ENCODE measurements at regions of chr10 and their contacts with region 1.

Region 1: DNA sequence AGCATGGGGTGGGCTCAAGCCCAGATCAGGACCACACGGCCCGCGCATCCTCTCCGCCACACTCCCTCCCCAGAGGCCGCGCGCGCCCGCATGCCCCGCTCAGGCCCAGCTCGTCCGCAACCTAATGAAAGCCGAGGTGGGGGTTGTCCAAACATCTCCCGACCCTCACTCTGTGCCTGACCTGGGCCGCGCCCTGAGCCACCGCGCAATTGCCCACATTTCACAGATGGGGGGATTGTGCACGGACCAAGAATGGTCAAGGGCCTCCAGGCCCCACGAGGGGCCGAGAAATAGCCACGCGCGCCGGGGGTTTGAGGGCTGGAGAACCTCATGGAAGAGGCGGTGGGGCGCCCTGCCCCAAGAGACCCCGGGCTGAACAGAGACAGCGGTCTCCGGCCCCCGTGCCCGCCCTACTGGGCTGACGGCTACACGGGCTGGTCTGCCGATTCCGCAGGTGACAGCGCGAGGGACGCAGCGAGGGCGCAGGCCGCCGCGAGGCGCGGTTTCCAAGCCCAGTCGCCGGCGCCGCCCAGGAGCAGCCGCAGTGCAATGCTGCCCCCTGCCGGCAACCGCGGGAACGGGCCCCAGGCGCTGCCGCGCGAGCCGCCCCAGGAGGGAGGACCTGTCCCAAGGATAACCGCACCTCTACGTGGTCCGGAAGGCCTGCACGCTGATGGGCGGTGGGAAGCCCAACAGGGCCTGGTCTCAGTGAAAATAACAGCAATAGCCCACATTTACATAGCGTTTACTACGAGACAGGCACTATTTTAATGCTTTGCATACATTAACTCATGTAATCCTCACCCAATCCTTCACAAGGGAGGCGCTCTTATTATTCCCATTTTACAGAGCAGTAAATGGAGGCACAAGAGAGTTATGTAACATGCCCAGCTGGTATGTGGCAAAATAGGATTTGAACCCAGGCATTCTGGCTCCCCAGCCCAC is 10.5 kb upstream of the GRID1 start:
- DNase-seq: peak; percentile 82
- ATAC-seq: peak; percentile 93
- H3K4me3 ChIP-seq: peak overlapping the region in 2 of 5 experiments; percentile 20 to 24
- H3K4me3 Mint-ChIP-seq: no peak overlapping the region
- H3K27ac ChIP-seq: no peak overlapping the region
- H3K27ac Mint-ChIP-seq: no peak overlapping the region
- H3K4me1 ChIP-seq: peaks cover 5 to 8% of the 10 kb centered on the region in 2 donors
- H3K4me1 Mint-ChIP-seq: peaks cover 2% of the 10 kb centered on the region
- H3K27me3 ChIP-seq: peaks cover 0 to 54% (median 21%) of the 10 kb centered on the region in 4 experiments
- H3K27me3 Mint-ChIP-seq: peaks cover 55% of the 10 kb centered on the region
- CTCF ChIP-seq: peak; percentile 99

Region 2: DNA sequence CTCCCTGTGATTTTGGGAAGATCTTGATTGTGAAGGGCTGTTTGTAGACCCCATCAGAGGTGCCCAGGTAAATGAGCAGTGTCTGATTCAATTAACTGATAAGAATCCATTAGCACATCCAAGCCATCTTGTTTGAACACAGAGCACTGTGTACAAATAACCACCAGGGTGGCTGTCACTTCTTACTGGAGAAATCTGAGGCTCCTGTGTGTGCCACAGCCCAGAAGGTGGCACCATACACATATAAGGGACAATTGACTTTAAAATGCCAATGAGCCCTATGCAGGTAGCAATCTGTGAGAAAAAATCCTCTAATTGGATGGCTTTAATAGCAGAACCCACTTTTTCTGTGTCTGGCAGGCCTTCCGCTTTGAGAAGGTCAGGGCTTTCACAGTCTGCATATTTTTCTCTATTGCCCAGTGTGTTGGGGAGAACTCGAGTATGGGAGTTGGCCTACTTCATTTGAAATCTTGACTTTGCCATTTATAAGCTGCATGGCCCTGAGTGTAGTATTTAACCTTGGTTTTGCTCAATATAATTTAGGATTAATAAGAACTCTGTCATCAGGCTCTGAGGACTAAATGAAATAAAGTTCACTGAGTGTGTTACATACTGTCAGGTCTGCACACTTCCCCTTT is 1531.4 kb before region 1 on chr10:
- CTCF ChIA-PET with region 1: no interaction called
- POLR2A ChIA-PET with region 1: no interaction called
- intact Hi-C with region 1: loop called (anchors 10 kb)
- DNase-seq: no peak
- ATAC-seq: no peak
- H3K4me3 ChIP-seq: no peak overlapping the region
- H3K4me3 Mint-ChIP-seq: no peak overlapping the region
- H3K27ac ChIP-seq: no peak overlapping the region
- H3K27ac Mint-ChIP-seq: no peak overlapping the region
- H3K4me1 ChIP-seq: no peaks in the 10 kb centered on the region
- H3K4me1 Mint-ChIP-seq: no peaks in the 10 kb centered on the region
- H3K27me3 ChIP-seq: no peaks in the 10 kb centered on the region
- H3K27me3 Mint-ChIP-seq: no peaks in the 10 kb centered on the region
- CTCF ChIP-seq: no peak

Region 3: DNA sequence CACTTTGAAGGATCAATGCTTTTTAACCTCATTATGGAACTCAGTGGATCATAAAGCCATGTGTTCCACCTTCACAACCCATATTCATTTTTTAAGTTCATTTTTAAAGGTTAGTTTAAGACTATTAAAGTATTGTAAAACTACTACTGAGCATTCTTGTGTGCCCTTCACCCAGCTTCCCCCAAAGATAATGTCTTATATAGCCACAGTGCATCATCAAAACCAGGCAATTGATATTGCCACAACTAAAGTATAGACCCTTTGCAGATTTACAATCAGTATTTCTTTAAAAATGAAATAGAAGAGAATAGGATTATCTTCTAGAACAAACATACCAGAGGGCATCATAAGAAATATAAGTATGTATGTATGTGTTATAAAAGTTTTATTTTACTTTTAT is 1451.6 kb before region 1 on chr10:
- CTCF ChIA-PET with region 1: no interaction called
- POLR2A ChIA-PET with region 1: no interaction called
- intact Hi-C with region 1: loop called (anchors 5 kb)
- DNase-seq: no peak
- ATAC-seq: no peak
- H3K4me3 ChIP-seq: no peak overlapping the region
- H3K4me3 Mint-ChIP-seq: no peak overlapping the region
- H3K27ac ChIP-seq: no peak overlapping the region
- H3K27ac Mint-ChIP-seq: no peak overlapping the region
- H3K4me1 ChIP-seq: no peaks in the 10 kb centered on the region
- H3K4me1 Mint-ChIP-seq: no peaks in the 10 kb centered on the region
- H3K27me3 ChIP-seq: no peaks in the 10 kb centered on the region
- H3K27me3 Mint-ChIP-seq: no peaks in the 10 kb centered on the region
- CTCF ChIP-seq: no peak

Region 4: DNA sequence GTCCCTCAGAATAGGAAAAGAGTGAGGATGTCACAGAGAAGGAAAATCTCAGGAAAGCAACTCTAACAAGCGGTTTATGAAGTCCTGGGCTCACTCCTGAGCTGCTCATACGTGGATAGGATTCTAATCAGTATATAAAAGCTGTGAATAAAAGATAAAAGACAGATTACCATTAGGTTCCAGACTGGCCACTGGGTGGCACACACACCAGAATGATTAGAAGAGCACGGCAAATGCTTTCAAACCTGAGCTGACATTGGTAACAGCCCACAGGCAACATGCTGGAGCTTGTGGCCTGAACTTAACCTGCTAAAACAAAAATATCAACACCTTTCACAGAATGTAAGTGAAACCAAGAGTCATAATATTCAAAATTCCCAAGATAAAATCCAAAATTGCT is 381.3 kb before region 1 on chr10:
- CTCF ChIA-PET with region 1: interaction called, 8 read pairs
- POLR2A ChIA-PET with region 1: no interaction called
- intact Hi-C with region 1: loop called (anchors 5 kb)
- DNase-seq: no peak
- ATAC-seq: no peak
- H3K4me3 ChIP-seq: no peak overlapping the region
- H3K4me3 Mint-ChIP-seq: no peak overlapping the region
- H3K27ac ChIP-seq: no peak overlapping the region
- H3K27ac Mint-ChIP-seq: no peak overlapping the region
- H3K4me1 ChIP-seq: no peaks in the 10 kb centered on the region
- H3K4me1 Mint-ChIP-seq: no peaks in the 10 kb centered on the region
- H3K27me3 ChIP-seq: peaks cover 0 to 17% (median 8%) of the 10 kb centered on the region in 4 experiments
- H3K27me3 Mint-ChIP-seq: peaks cover 9% of the 10 kb centered on the region
- CTCF ChIP-seq: peak; percentile 17